Activated CD4-positive, alpha-beta T cell treated with anti-CD3 and anti-CD28 coated beads, Interleukin-2, amount 10 ng/mL, durations not matched to agents 24 days and 14 days (primary cell): ENCODE measurements at regions of chr2 and their contacts with region 1.

Region 1: DNA sequence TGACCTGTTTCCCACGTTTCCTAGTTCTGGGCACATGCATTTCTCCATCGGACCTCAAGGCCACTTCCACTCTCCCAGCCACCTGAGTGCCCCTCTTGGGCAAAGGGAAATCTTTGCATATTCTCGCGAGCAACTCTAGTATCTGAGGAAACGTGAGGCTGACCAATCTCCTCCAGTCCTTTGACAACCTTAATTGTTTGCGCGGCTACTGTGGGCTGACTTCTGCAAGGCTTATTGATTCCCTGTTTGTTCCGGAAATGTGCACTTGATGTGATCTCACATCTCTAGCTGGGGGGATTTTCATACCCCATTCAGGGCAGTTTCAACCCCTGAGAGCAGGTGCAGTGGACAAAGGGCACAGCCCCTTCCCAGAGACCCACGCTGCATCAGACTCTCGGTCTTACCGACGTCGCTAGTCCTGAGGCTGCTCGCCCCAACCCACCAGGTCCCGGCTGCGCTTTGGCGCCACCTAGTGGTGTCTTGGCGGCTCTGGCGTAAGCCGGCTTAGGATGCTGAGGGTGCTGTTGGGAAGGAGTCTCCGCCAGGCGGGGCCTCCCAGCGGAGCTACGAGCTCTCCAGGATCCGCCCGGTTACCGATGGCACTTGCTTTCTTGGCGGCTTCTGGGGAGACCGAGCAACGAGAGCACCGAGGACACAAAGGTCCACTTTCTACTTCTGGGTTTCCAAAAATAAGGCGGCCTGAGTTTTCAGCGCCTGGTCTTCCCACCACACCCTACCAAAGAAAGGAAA is 24.8 kb upstream of the SPR start:
- DNase-seq: peak; percentile 97
- H3K4me3 Mint-ChIP-seq: peak overlapping the region; percentile 76
- H3K27ac Mint-ChIP-seq: no peak overlapping the region
- H3K4me1 Mint-ChIP-seq: peaks cover 9% of the 10 kb centered on the region
- H3K27me3 Mint-ChIP-seq: peaks cover 33% of the 10 kb centered on the region

Region 2: DNA sequence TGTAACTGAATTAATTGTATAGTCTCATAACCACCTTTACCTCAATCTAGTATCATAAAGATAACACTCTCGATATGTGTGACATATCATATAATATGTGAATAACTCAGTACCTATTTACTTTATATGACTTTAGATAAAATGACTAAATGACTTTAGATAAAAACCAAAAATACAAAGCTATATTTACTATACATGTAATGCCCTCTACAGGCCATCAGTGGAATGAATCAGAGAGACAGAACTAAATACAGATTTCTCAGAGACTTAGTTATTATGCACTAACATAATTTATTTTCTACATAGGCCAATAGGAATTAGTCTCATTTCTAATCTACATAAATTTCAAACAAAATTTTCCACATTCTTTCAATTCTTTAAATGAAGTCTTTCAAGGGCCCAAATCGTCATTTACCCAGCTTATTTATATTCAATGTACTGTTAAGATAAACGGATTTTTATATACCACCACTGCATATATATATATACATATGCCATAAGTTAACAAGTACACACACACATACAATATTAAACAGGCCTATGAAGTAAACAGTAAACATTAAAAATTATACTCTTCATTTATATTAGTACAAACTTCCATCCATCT is 256.5 kb before region 1 on chr2:
- intact Hi-C with region 1: loop called (anchors 10 kb)
- DNase-seq: no peak
- H3K4me3 Mint-ChIP-seq: no peak overlapping the region
- H3K27ac Mint-ChIP-seq: no peak overlapping the region
- H3K4me1 Mint-ChIP-seq: no peaks in the 10 kb centered on the region
- H3K27me3 Mint-ChIP-seq: peaks cover 2% of the 10 kb centered on the region

Region 3: GRCh38 chr2:72770879-72771461 is 91.4 kb before region 1 on chr2:
- intact Hi-C with region 1: loop called (anchors 1 kb)
- DNase-seq: peak; percentile 91
- H3K4me3 Mint-ChIP-seq: no peak overlapping the region
- H3K27ac Mint-ChIP-seq: no peak overlapping the region
- H3K4me1 Mint-ChIP-seq: no peaks in the 10 kb centered on the region
- H3K27me3 Mint-ChIP-seq: no peaks in the 10 kb centered on the region

Region 4: GRCh38 chr2:72825241-72826155 is 36.9 kb before region 1 on chr2 and contains the start of gene EXOC6B:
- intact Hi-C with region 1: loop called (anchors 1 kb)
- DNase-seq: peak; percentile 96
- H3K4me3 Mint-ChIP-seq: peak within 1 kb of the TSS; percentile 95
- H3K27ac Mint-ChIP-seq: peak within 1 kb of the TSS; percentile 87
- H3K4me1 Mint-ChIP-seq: peaks cover 45% of the 10 kb centered on the region
- H3K27me3 Mint-ChIP-seq: peaks cover 4% of the 10 kb centered on the region
- total RNA-seq, gene EXOC6B: 7.8 and 8.4 TPM in 2 replicates

Region 5: DNA sequence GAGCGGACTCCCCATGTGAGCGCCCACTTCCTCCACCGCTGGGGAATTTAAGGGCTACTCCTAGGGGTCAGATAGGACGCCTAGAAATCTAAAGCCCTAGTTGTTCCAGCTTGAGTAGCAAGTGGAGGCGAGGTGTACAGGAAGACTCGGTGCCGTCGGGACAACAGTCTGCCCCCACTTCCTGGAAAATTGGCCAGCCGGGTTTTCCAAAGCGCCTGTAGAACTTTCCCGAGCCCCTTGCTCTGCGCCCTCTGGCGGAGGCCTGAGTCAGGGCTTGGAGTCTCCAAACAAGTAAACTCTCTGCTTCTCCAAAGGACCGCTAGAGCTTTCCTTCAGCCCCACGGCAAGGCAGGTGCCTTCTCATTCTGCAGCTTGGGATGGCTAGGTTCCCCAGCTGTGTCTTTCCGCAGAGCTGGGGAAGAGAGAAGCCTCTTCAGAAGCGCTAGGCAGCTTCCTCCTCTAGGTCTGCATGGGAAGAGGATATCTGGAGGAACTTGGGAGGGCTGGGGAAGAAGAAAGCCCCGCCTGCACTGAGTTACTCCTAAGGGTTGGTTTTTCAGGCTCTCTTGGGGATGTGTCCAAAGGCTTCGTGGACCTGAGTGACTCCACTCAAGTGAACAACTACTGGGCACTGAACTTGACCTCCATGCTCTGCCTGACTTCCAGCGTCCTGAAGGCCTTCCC is 25.5 kb after region 1 on chr2:
- intact Hi-C with region 1: loop called (anchors 2 kb)
- DNase-seq: peak; percentile 85
- H3K4me3 Mint-ChIP-seq: peak overlapping the region; percentile 81
- H3K27ac Mint-ChIP-seq: no peak overlapping the region
- H3K4me1 Mint-ChIP-seq: peaks cover 4% of the 10 kb centered on the region
- H3K27me3 Mint-ChIP-seq: peaks cover 34% of the 10 kb centered on the region

Region 6: GRCh38 chr2:72915907-72916742 is 53.7 kb after region 1 on chr2:
- intact Hi-C with region 1: loop called (anchors 5 kb)
- DNase-seq: peak; percentile 77
- H3K4me3 Mint-ChIP-seq: peak overlapping the region; percentile 60
- H3K27ac Mint-ChIP-seq: no peak overlapping the region
- H3K4me1 Mint-ChIP-seq: peaks cover 10% of the 10 kb centered on the region
- H3K27me3 Mint-ChIP-seq: peaks cover 71% of the 10 kb centered on the region